Vagina (tissue), 2 donors: ENCODE measurements at regions of chrX and their contacts with region 1.

Region 1: GRCh38 chrX:15350329-15350996 is 15.1 kb upstream of the PIGA start:
- DNase-seq: no peak
- H3K4me3 ChIP-seq: no peak overlapping the region
- H3K27ac ChIP-seq: no peak overlapping the region
- H3K4me1 ChIP-seq: no peaks in the 10 kb centered on the region
- H3K27me3 ChIP-seq: no peaks in the 10 kb centered on the region
- CTCF ChIP-seq: no peak
- POLR2A ChIP-seq: no peak

Region 2: DNA sequence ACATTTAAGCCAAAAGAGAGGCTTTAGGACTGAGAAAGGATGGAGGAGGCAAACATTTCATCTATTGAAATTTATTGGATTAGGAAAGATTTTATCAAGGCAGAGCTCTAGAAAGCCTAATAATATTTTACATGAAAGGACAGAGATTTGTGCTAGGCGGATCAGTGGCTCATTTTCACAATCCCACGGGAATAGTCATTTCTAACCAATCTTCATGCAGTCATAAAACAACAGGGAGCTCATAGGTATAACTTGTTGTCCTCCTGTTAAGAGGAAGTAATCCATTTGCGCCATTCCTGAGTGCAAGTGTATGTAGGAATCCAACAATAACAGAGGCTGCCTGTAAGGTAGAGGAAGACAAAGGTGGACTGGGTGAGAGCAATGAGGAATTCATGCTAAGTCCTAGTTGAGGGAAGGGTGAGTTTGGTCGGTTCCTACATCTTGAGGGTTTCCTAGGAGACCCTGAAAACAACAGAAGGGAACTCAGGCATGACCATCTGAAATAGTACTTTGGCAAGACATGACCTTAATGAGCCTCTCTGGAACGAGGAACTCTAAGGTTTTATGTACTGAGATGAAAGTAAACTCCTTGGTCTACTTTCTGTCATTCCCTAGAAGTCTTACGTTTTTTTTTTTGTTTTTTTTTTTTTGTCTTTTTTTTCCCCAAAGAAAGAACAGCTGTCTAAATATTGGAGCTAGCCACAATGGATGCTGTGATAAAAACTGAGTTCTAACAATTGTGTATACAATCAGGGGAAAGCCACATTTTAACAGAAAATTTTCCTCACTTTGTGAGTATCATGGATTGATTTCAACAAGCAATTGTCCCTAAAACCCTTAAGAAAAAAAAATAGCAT is 1410.5 kb before region 1 on chrX:
- intact Hi-C with region 1: loop called (anchors 5 kb)
- DNase-seq: no peak
- H3K4me3 ChIP-seq: no peak overlapping the region
- H3K27ac ChIP-seq: no peak overlapping the region
- H3K4me1 ChIP-seq: peaks cover 4% of the 10 kb centered on the region
- H3K27me3 ChIP-seq: no peaks in the 10 kb centered on the region
- CTCF ChIP-seq: no peak
- POLR2A ChIP-seq: no peak

Region 3: GRCh38 chrX:15143050-15143824 is 207.2 kb before region 1 on chrX:
- intact Hi-C with region 1: no loop called
- DNase-seq: no peak
- H3K4me3 ChIP-seq: no peak overlapping the region
- H3K27ac ChIP-seq: no peak overlapping the region
- H3K4me1 ChIP-seq: no peaks in the 10 kb centered on the region
- H3K27me3 ChIP-seq: no peaks in the 10 kb centered on the region
- CTCF ChIP-seq: peak; percentile 45 to 68 (median 53)
- POLR2A ChIP-seq: no peak

Region 4: DNA sequence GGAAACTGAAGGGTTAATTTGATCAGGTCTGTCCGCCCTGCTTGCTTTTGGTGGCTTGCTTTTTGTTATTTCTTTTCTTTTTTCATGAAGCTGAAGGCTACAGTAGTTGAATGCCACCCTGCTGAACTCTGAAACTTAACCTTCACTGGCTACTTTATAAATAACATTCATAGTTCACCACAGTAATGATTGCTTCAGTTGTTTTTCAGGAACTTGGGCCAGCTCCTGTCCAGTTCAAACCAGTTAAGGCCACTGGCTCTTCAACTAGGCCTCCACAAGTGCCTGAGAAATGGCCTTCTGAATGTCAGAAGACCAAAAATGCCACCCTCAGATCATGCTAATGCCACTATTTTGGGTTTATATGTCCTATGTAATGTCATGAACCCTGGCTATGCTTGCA is 72.9 kb before region 1 on chrX:
- intact Hi-C with region 1: no loop called
- DNase-seq: no peak
- H3K4me3 ChIP-seq: no peak overlapping the region
- H3K27ac ChIP-seq: no peak overlapping the region
- H3K4me1 ChIP-seq: no peaks in the 10 kb centered on the region
- H3K27me3 ChIP-seq: no peaks in the 10 kb centered on the region
- CTCF ChIP-seq: no peak
- POLR2A ChIP-seq: no peak

Region 5: GRCh38 chrX:15398874-15399273 is 48.4 kb after region 1 on chrX:
- intact Hi-C with region 1: no loop called
- DNase-seq: no peak
- H3K4me3 ChIP-seq: no peak overlapping the region
- H3K27ac ChIP-seq: no peak overlapping the region
- H3K4me1 ChIP-seq: no peaks in the 10 kb centered on the region
- H3K27me3 ChIP-seq: no peaks in the 10 kb centered on the region
- CTCF ChIP-seq: no peak
- POLR2A ChIP-seq: no peak